ENCODE measurements at regions of chr7 and their contacts with region 1.

Region 1: DNA sequence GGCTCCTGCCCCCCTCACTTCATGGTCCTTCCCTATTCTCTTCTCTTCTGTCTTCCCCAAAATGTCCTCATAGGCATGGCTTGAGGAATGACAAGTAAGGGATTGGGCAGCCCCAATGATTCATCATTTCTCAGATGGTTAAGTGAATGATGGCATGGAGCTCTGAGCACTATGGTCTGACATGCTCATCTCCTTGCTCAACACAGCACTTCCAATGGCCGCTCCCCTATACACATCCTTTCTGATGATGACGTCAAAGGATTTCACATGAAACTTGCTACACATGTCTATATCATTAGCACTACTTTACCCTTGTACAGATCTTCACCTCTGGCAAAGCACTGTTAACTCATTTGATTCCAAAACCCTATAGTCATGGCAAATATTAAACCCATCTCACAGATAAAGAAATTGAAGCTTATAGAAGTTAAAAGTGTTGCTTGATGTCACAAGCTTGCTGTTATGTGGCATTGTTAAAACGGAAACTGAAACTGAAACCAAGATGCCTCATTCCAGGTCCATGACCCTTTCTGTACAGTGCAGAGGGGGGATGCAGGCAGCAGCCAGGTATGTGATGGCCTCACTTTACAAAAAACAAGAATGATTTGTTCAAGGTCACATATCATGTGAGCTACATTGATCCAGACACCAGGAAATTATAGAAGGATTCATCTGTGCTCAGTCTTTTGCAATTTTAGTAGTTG is 90.0 kb upstream of the PLXNA4 start:
- DNase-seq: peak in 2 of 9 experiments; percentile 33 to 64
- ATAC-seq: peak; percentile 90
- H3K4me3 ChIP-seq: peak overlapping the region in 1 of 2 experiments; percentile 15
- H3K4me3 Mint-ChIP-seq: peak overlapping the region; percentile 66
- H3K27ac ChIP-seq: no peak overlapping the region
- H3K27ac Mint-ChIP-seq: peak overlapping the region; percentile 85
- H3K4me1 ChIP-seq: peaks cover 12% of the 10 kb centered on the region
- H3K4me1 Mint-ChIP-seq: peaks cover 12% of the 10 kb centered on the region
- H3K27me3 ChIP-seq: no peaks in the 10 kb centered on the region
- H3K27me3 Mint-ChIP-seq: no peaks in the 10 kb centered on the region
- CTCF ChIP-seq: no peak

Region 2: DNA sequence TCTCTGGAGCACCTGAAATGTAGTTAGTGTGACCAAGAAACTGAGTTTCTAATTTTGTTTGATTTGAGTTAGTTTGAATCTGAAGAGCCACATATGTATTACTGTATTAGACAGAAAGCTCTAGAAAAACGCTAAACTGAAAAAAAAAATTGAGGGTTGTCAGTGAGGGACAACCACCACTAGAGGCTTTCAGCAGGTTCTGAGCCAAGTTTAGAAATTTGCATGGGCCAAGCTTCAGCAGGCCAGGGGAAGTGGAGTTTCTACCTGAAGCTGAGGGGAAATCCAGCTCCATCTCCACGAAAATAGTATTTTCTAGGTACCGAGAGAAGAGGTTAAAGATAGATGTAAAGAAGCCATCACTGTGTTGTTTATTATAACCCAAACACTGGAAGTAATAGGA is 12.1 kb before region 1 on chr7:
- CTCF ChIA-PET with region 1: interaction called, 3 read pairs
- POLR2A ChIA-PET with region 1: interaction called, 10 read pairs
- intact Hi-C with region 1: no loop called
- DNase-seq: peak in 2 of 9 experiments; percentile 31 to 37
- ATAC-seq: no peak
- H3K4me3 ChIP-seq: no peak overlapping the region
- H3K4me3 Mint-ChIP-seq: peak overlapping the region; percentile 24
- H3K27ac ChIP-seq: no peak overlapping the region
- H3K27ac Mint-ChIP-seq: no peak overlapping the region
- H3K4me1 ChIP-seq: peaks cover 26% of the 10 kb centered on the region
- H3K4me1 Mint-ChIP-seq: peaks cover 38% of the 10 kb centered on the region
- H3K27me3 ChIP-seq: peaks cover 0 to 5% of the 10 kb centered on the region in 2 experiments
- H3K27me3 Mint-ChIP-seq: no peaks in the 10 kb centered on the region
- CTCF ChIP-seq: no peak

Region 3: DNA sequence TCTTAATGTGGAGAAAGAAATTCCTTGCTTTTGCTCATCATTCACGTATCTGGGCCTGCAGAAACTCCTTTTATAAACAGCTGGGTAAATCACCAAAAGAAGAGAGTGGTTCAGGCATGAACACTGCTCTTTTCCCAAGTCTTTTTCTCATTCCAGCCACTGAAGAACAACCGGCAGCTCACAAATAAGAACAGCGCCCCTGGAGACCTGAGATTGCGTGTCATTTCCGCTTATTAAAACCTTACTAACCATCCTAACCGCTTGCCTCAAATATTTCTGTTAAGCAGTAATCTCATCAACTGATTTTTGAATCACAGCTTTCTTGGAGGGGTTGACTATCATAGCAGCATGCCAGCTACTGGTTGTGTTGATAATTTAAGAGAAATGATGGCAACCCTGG is 123.1 kb after region 1 on chr7:
- CTCF ChIA-PET with region 1: no interaction called
- POLR2A ChIA-PET with region 1: no interaction called
- intact Hi-C with region 1: no loop called
- DNase-seq: no peak
- ATAC-seq: no peak
- H3K4me3 ChIP-seq: no peak overlapping the region
- H3K4me3 Mint-ChIP-seq: no peak overlapping the region
- H3K27ac ChIP-seq: no peak overlapping the region
- H3K27ac Mint-ChIP-seq: no peak overlapping the region
- H3K4me1 ChIP-seq: no peaks in the 10 kb centered on the region
- H3K4me1 Mint-ChIP-seq: no peaks in the 10 kb centered on the region
- H3K27me3 ChIP-seq: no peaks in the 10 kb centered on the region
- H3K27me3 Mint-ChIP-seq: no peaks in the 10 kb centered on the region
- CTCF ChIP-seq: no peak

Measured in CD8-positive, alpha-beta T cell (primary cell).